PC-9 (cell line): ENCODE measurements at regions of chr21 and their contacts with region 1.

Region 1: GRCh38 chr21:34722684-34723300 is 54.0 kb downstream of the CLIC6 start:
- DNase-seq: no peak
- H3K4me3 ChIP-seq: no peak overlapping the region
- H3K27ac ChIP-seq: no peak overlapping the region
- H3K4me1 ChIP-seq: no peaks in the 10 kb centered on the region
- H3K27me3 ChIP-seq: no peaks in the 10 kb centered on the region
- CTCF ChIP-seq: peak; percentile 64

Region 2: DNA sequence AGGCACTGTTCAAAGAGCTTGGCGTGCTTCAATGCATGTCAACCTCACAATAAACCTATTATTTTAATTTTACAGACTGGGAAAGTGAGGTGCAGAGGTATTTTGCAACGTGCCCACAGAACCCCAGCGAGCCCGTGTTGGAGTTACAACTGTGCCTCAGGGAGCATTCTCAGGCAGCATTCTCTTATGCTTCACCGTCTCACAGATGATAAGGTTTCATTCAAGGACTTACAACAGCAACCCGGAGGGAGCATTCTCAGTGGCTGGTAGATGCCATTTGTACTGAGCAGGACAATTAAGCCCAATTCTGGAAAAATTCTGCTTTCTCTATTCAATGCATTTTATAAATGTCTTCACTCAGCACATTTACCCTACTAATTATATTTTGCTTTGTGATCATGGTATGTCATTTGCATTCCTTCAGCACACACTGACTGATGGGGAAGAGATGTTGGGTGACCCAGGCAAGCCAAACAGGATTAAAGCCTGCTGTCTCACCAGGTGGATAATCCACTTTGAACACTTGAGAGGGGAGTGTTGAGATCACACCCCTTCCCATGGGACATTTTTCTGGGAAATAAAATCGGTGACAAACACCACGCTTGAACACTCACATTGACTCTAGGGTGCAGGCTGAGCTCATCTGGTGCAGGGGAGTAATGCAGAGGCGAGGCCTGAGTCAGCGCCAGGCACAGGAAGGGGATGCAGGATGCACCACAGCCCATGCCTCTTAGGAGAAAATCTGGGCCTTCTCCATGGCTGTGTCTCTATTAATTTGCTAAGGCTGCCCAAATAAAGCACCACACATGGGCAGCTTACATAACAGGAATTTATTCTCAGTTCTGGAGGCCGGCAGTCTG is 59.9 kb after region 1 on chr21:
- CTCF ChIA-PET with region 1: no interaction called
- POLR2A ChIA-PET with region 1: no interaction called
- intact Hi-C with region 1: loop called (anchors 2 kb)
- DNase-seq: no peak
- H3K4me3 ChIP-seq: no peak overlapping the region
- H3K27ac ChIP-seq: no peak overlapping the region
- H3K4me1 ChIP-seq: no peaks in the 10 kb centered on the region
- H3K27me3 ChIP-seq: no peaks in the 10 kb centered on the region
- CTCF ChIP-seq: no peak

Region 3: DNA sequence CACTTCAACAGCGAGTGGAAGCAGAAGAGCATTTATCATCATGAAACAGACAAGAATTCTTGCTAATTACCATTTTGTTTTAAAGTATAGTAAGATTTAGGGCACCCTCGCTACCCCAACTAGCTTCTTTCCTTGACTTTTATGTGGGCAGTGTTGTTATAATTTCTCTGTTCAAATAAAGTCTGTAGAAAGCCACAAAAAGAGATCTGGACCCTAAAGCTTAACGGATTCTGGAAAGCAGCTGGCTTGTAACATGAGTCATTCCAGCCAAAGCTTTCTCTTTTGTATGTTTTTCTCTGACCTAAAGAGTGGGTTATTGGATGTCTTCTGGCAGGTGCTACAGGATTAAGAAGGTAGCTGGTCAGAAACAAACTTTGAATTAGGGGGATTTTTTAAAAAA is 288.9 kb after region 1 on chr21:
- CTCF ChIA-PET with region 1: no interaction called
- POLR2A ChIA-PET with region 1: no interaction called
- intact Hi-C with region 1: no loop called
- DNase-seq: no peak
- H3K4me3 ChIP-seq: no peak overlapping the region
- H3K27ac ChIP-seq: no peak overlapping the region
- H3K4me1 ChIP-seq: peaks cover 43% of the 10 kb centered on the region
- H3K27me3 ChIP-seq: no peaks in the 10 kb centered on the region
- CTCF ChIP-seq: no peak